ENCODE measurements at regions of chr5 and their contacts with region 1.

Region 1: GRCh38 chr5:102762562-102763227 is 7.6 kb downstream of the PAM start:
- DNase-seq: no peak
- ATAC-seq: peak; percentile 14
- H3K4me3 Mint-ChIP-seq: peak overlapping the region; percentile 74
- H3K27ac Mint-ChIP-seq: peak overlapping the region; percentile 84
- H3K4me1 Mint-ChIP-seq: peaks cover 82% of the 10 kb centered on the region
- H3K27me3 Mint-ChIP-seq: no peaks in the 10 kb centered on the region

Region 2: GRCh38 chr5:102715082-102715819 is 47.4 kb before region 1 on chr5:
- CTCF ChIA-PET with region 1: no interaction called
- DNase-seq: no peak
- ATAC-seq: no peak
- H3K4me3 Mint-ChIP-seq: no peak overlapping the region
- H3K27ac Mint-ChIP-seq: no peak overlapping the region
- H3K4me1 Mint-ChIP-seq: no peaks in the 10 kb centered on the region
- H3K27me3 Mint-ChIP-seq: peaks cover 21% of the 10 kb centered on the region

Region 3: GRCh38 chr5:102782311-102782770 is 19.6 kb after region 1 on chr5:
- CTCF ChIA-PET with region 1: interaction called, 19 read pairs
- DNase-seq: no peak
- ATAC-seq: no peak
- H3K4me3 Mint-ChIP-seq: no peak overlapping the region
- H3K27ac Mint-ChIP-seq: no peak overlapping the region
- H3K4me1 Mint-ChIP-seq: peaks cover 30% of the 10 kb centered on the region
- H3K27me3 Mint-ChIP-seq: no peaks in the 10 kb centered on the region

Measured in activated CD8-positive, alpha-beta memory T cell treated with anti-CD3 and anti-CD28 coated beads, Interleukin-2, amount 10 ng/mL, durations not matched to agents 7 days and 5 days (primary cell).